CD14-positive monocyte (primary cell): ENCODE measurements at regions of chr9 and their contacts with region 1.

Region 1: GRCh38 chr9:137423004-137423874 is at the starts of genes EXD3 and NOXA1:
- DNase-seq: peak; percentile 89 to 93 (median 93)
- H3K4me3 ChIP-seq: peak within 1 kb of the TSS; percentile 58 to 82 (median 62)
- H3K4me3 Mint-ChIP-seq: peak within 1 kb of the TSS; percentile 80 to 86
- H3K27ac ChIP-seq: peak within 1 kb of the TSS in 1 of 2 donors; percentile 72
- H3K27ac Mint-ChIP-seq: peak within 1 kb of the TSS in 4 of 7 donors; percentile 61 to 78 (median 64)
- H3K4me1 ChIP-seq: peaks cover 19 to 29% of the 10 kb centered on the region in 2 donors
- H3K4me1 Mint-ChIP-seq: peaks cover 21% of the 10 kb centered on the region
- H3K27me3 ChIP-seq: no peaks in the 10 kb centered on the region
- H3K27me3 Mint-ChIP-seq: peaks cover 0 to 5% (median 0%) of the 10 kb centered on the region in 3 donors
- CTCF ChIP-seq: peak; percentile 91
- polyA plus RNA-seq, gene EXD3: 2.0 to 10.8 (median 3.0) TPM
- polyA plus RNA-seq, gene NOXA1: 1.3 to 9.4 (median 1.6) TPM

Region 2: GRCh38 chr9:137445275-137445807 is 22.1 kb after region 1 on chr9:
- intact Hi-C with region 1: loop called (anchors 2 kb)
- DNase-seq: peak; percentile 89 to 94 (median 91)
- H3K4me3 ChIP-seq: no peak overlapping the region
- H3K4me3 Mint-ChIP-seq: peak overlapping the region in 1 of 2 donors; percentile 52
- H3K27ac ChIP-seq: no peak overlapping the region
- H3K27ac Mint-ChIP-seq: peak overlapping the region in 6 of 7 donors; percentile 69 to 91 (median 80)
- H3K4me1 ChIP-seq: peaks cover 47 to 61% of the 10 kb centered on the region in 2 donors
- H3K4me1 Mint-ChIP-seq: peaks cover 39% of the 10 kb centered on the region
- H3K27me3 ChIP-seq: peaks cover 5 to 11% of the 10 kb centered on the region in 2 donors
- H3K27me3 Mint-ChIP-seq: peaks cover 11 to 21% (median 18%) of the 10 kb centered on the region in 3 donors
- CTCF ChIP-seq: peak; percentile 80

Region 3: GRCh38 chr9:137453643-137454081 is 30.4 kb after region 1 on chr9:
- intact Hi-C with region 1: loop called (anchors 1 to 5 kb)
- DNase-seq: peak; percentile 79 to 86 (median 85)
- H3K4me3 ChIP-seq: peak overlapping the region; percentile 10 to 77 (median 40)
- H3K4me3 Mint-ChIP-seq: peak overlapping the region; percentile 75 to 83
- H3K27ac ChIP-seq: peak overlapping the region in 1 of 2 donors; percentile 76
- H3K27ac Mint-ChIP-seq: peak overlapping the region; percentile 49 to 91 (median 89)
- H3K4me1 ChIP-seq: peaks cover 56 to 71% of the 10 kb centered on the region in 2 donors
- H3K4me1 Mint-ChIP-seq: peaks cover 25% of the 10 kb centered on the region
- H3K27me3 ChIP-seq: no peaks in the 10 kb centered on the region
- H3K27me3 Mint-ChIP-seq: peaks cover 0 to under 1% (median 0%) of the 10 kb centered on the region in 3 donors
- CTCF ChIP-seq: no peak

Region 4: DNA sequence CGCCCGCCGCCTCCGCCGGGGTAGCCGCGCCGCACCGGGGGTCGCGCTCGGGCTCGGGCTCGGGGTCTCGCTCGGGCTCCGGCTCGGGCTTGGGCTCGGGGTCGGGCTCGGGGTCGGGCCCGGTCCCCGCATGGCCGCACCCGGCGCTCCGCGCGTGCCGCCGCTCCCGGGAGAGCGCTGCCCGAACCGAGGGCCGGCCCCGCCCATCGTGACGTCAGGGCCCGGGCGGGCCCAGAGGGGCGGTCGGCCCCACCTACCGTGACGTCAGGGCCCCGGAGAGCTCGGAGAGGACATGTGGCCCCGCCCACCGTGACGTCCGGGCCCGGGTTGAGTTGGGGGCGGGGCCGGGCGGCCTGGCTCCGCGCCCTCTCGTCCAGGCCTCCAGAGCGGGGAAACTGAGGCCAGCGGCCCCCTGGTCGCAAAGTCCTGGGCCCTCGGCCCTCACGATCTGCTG is 35.9 kb after region 1 on chr9 and contains the start of gene NSMF:
- intact Hi-C with region 1: loop called (anchors 1 to 5 kb)
- DNase-seq: peak; percentile 90 to 95 (median 92)
- H3K4me3 ChIP-seq: peak within 1 kb of the TSS; percentile 28 to 75 (median 46)
- H3K4me3 Mint-ChIP-seq: peak within 1 kb of the TSS; percentile 59 to 76
- H3K27ac ChIP-seq: peak within 1 kb of the TSS; percentile 31 to 87
- H3K27ac Mint-ChIP-seq: peak within 1 kb of the TSS; percentile 54 to 89 (median 72)
- H3K4me1 ChIP-seq: peaks cover 26 to 46% of the 10 kb centered on the region in 2 donors
- H3K4me1 Mint-ChIP-seq: peaks cover 10% of the 10 kb centered on the region
- H3K27me3 ChIP-seq: peaks cover 0 to 15% of the 10 kb centered on the region in 2 donors
- H3K27me3 Mint-ChIP-seq: peaks cover 5 to 19% (median 11%) of the 10 kb centered on the region in 3 donors
- CTCF ChIP-seq: no peak
- polyA plus RNA-seq, gene NSMF: 4.6 to 68.4 (median 5.3) TPM

Region 5: DNA sequence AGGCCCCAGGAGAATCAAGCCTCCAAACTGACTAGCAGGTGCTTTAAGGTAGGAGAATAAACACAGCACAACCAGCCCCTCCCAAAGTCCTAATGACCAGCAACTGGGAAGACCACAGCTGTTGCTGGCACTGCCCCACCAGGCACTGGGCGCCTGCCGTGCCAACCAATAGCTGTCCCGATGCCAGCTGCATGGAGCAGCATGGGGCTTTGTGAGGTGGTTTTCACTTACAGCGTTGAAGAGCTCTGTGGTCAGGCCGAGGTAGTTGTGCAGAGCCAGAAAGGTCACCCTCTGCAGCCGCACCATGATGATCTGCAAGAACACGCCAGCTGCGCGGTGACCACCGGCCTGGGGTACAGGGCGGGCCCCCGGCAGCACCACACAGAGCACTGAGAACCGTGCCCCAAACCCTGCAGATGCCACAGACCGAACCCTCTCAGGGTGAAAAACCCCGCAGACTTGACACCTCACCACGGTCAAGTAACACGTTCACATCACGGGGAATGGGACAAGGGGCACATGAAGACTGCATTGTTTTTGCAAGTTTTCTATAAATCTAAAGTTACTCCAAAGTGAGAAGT is 98.3 kb after region 1 on chr9:
- intact Hi-C with region 1: loop called in 1 of 2 experiments (anchors 10 kb)
- DNase-seq: no peak
- H3K4me3 ChIP-seq: no peak overlapping the region
- H3K4me3 Mint-ChIP-seq: no peak overlapping the region
- H3K27ac ChIP-seq: no peak overlapping the region
- H3K27ac Mint-ChIP-seq: no peak overlapping the region
- H3K4me1 ChIP-seq: no peaks in the 10 kb centered on the region
- H3K4me1 Mint-ChIP-seq: peaks cover 2% of the 10 kb centered on the region
- H3K27me3 ChIP-seq: no peaks in the 10 kb centered on the region
- H3K27me3 Mint-ChIP-seq: peaks cover 0 to 2% (median 2%) of the 10 kb centered on the region in 3 donors
- CTCF ChIP-seq: no peak